GM12878 (cell line): ENCODE measurements at regions of chr6 and their contacts with region 1.

Region 1: GRCh38 chr6:126033696-126034095 is 47.4 kb downstream of the TRMT11 start:
- DNase-seq: no peak
- ATAC-seq: peak; percentile 86
- H3K4me3 ChIP-seq: no peak overlapping the region
- H3K27ac ChIP-seq: no peak overlapping the region
- H3K4me1 ChIP-seq: no peaks in the 10 kb centered on the region
- H3K27me3 ChIP-seq: no peaks in the 10 kb centered on the region
- CTCF ChIP-seq: peak; percentile 34 to 56 (median 46); a peak in 5 of 6 replicates
- EP300 ChIP-seq: no peak
- POLR2A ChIP-seq: no peak
- RAD21 ChIP-seq: peak; percentile 65

Region 2: DNA sequence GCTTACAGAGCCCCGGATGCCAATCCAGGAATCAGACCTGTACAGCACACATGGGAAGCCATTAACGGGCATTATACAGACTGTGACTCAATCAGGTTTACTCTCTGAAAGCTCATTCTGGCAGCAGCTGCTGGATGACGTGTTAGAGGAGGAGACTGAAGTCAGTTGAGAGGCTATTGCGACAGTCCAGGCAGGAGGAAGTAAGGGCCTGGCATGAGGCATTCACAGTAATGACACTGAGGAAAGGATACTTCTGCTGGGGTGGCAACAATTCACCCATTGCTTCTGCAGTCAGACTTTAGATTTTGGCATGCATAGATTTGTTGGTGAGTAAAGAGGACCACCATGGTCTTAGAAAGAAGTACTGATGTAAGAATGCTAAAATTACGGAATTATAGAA is 435.3 kb before region 1 on chr6:
- CTCF ChIA-PET with region 1: no interaction called
- POLR2A ChIA-PET with region 1: no interaction called
- RAD21 ChIA-PET with region 1: no interaction called
- SMC1A ChIA-PET with region 1: no interaction called
- in situ Hi-C with region 1: no loop called
- intact Hi-C with region 1: no loop called
- DNase-seq: no peak
- ATAC-seq: peak; percentile 44
- H3K4me3 ChIP-seq: no peak overlapping the region
- H3K27ac ChIP-seq: no peak overlapping the region
- H3K4me1 ChIP-seq: no peaks in the 10 kb centered on the region
- H3K27me3 ChIP-seq: no peaks in the 10 kb centered on the region; a peak in 1 of 4 replicates
- CTCF ChIP-seq: no peak
- EP300 ChIP-seq: no peak
- POLR2A ChIP-seq: no peak
- RAD21 ChIP-seq: no peak

Region 3: DNA sequence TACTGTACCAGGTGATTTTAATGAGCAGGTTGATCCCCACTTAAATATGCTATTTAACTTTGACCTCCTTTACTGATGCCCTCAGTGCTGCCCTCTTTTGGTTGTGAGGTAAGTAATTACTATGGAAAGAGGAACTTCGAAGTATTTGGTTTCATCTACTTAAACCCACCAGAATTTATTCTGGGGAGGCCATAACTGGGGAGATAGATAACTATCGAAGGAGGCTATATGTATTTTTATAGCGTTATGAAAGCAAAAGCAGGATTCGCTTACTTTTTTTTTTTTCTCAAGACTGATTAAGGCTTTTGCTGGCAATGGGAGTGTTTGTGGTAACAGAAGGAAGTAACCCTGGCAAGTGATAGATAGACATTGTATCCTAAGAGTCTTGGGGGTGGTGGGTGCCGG is 137.3 kb after region 1 on chr6:
- CTCF ChIA-PET with region 1: interaction called, 3 read pairs
- POLR2A ChIA-PET with region 1: no interaction called
- RAD21 ChIA-PET with region 1: no interaction called
- SMC1A ChIA-PET with region 1: interaction called, 4 read pairs
- in situ Hi-C with region 1: no loop called
- intact Hi-C with region 1: loop called (anchors 5 kb)
- DNase-seq: peak; percentile 20
- ATAC-seq: peak; percentile 95
- H3K4me3 ChIP-seq: no peak overlapping the region
- H3K27ac ChIP-seq: no peak overlapping the region
- H3K4me1 ChIP-seq: no peaks in the 10 kb centered on the region
- H3K27me3 ChIP-seq: no peaks in the 10 kb centered on the region
- CTCF ChIP-seq: peak; percentile 44 to 57 (median 45)
- EP300 ChIP-seq: no peak
- POLR2A ChIP-seq: no peak
- RAD21 ChIP-seq: peak; percentile 42

Region 4: DNA sequence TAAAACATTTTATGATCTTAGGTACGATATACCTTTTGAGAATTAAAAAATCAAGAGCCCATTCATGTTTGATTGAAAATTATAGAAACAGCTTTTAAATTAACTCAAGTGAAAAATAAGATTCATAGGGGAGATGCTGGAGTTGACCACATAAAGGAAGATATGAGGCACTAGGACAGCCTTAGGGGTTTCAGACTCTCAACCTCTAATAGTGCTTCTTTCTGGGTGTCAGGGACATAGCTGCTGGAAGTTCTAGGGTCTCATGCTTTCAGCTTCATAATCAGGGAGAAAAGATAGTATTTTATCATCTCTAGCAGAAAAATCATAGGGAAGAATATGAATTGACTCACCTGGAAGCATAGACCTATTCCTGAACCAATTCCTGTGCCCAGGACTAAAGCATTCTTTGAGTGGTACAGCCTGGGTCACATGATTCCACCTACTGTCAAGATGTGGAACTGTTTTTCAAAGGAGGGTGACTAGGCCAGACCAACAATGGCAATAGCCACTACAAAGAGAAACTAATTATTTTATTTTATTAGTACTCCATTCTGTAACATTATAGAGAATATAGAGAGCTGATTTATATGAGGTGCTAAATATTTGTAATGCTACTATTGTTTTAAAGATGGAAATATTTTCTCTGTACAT is 278.4 kb after region 1 on chr6:
- CTCF ChIA-PET with region 1: interaction called, 4 read pairs
- POLR2A ChIA-PET with region 1: no interaction called
- RAD21 ChIA-PET with region 1: no interaction called
- SMC1A ChIA-PET with region 1: no interaction called
- in situ Hi-C with region 1: no loop called
- intact Hi-C with region 1: loop called (anchors 10 kb)
- DNase-seq: no peak
- ATAC-seq: peak; percentile 98
- H3K4me3 ChIP-seq: no peak overlapping the region
- H3K27ac ChIP-seq: no peak overlapping the region
- H3K4me1 ChIP-seq: no peaks in the 10 kb centered on the region
- H3K27me3 ChIP-seq: no peaks in the 10 kb centered on the region
- CTCF ChIP-seq: peak; percentile 30 to 44 (median 41); a peak in 4 of 6 replicates
- EP300 ChIP-seq: no peak
- POLR2A ChIP-seq: no peak
- RAD21 ChIP-seq: peak; percentile 39

Region 5: DNA sequence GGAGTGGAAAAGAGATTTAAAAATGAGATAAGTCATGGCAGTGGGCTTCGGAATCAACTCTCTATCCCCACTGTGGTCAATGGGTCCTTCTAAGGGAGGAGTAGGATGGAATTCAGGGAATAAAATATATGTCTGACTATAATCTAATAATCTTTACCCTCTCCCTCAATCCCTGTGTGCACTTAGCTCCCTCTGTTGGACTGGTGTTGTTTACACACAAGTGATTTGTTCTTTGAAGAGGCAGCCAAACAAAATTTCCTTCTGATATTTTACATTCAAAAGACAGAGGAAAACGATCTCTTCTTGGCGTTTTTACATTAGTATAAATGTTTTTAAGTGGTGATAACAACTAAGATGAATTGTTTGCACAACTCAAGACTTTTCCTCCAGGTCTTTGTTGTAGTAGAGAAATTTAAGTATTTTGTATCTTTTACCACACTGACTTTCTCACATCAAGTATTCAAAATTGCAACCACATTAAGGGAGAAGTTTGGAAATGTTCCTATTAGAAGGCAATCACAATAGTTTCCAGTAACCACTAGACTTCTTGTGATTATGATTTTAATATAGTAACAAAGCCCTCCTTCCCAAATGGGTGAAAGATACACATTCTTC is 624.0 kb after region 1 on chr6:
- CTCF ChIA-PET with region 1: no interaction called
- POLR2A ChIA-PET with region 1: no interaction called
- RAD21 ChIA-PET with region 1: no interaction called
- SMC1A ChIA-PET with region 1: no interaction called
- in situ Hi-C with region 1: no loop called
- intact Hi-C with region 1: loop called (anchors 10 kb)
- DNase-seq: no peak
- ATAC-seq: peak; percentile 40; the same call in 1 of the 3 replicates
- H3K4me3 ChIP-seq: no peak overlapping the region
- H3K27ac ChIP-seq: no peak overlapping the region
- H3K4me1 ChIP-seq: no peaks in the 10 kb centered on the region
- H3K27me3 ChIP-seq: no peaks in the 10 kb centered on the region
- CTCF ChIP-seq: peak; percentile 38 to 55 (median 46); a peak in 4 of 6 replicates
- EP300 ChIP-seq: no peak
- POLR2A ChIP-seq: no peak
- RAD21 ChIP-seq: peak; percentile 66

Region 6: DNA sequence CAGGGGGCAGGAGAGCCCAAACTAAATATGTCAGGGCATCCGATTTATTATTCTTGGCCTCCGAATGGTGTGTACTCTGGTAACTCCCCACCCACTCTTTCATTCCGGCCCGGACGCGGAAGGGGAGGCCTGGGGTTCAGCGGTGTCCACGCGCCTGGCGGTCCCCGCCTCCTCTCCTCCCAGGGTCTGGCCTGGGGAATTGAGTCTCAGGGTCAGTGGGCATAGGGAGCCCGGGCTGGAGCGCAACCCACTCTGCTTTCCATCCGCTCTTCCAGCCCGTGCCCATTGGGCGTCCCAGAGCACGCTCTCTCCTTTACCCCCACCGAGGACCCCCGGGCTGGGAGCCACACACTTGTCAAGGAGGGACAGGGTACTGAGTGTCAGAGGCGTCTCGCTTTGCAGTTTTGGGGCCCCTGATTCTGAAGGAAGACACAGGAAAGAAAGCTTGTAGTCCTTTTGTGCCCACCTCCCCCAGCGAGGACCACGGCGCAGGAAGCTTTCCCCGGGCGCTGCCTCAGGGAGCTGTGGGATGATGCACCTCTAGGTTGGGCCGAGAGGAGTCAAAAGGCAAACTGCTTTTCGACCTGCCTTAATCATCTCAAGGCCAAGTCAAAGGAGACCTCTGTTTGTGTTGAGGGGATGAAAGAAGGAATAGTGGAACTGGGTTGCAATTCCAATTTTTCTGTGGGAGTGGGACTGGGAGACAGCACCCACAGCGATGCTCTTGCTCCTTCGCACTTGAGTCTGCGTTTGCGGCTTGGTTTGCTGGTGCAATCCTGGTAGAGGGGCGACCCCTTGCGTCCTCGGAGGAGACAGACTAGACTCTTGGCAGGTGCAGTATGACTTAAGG is 1087.3 kb after region 1 on chr6:
- CTCF ChIA-PET with region 1: no interaction called
- POLR2A ChIA-PET with region 1: no interaction called
- RAD21 ChIA-PET with region 1: no interaction called
- SMC1A ChIA-PET with region 1: no interaction called
- in situ Hi-C with region 1: no loop called
- intact Hi-C with region 1: loop called (anchors 5 kb)
- DNase-seq: peak; percentile 24
- ATAC-seq: peak; percentile 90
- H3K4me3 ChIP-seq: no peak overlapping the region
- H3K27ac ChIP-seq: no peak overlapping the region
- H3K4me1 ChIP-seq: peaks cover 5% of the 10 kb centered on the region
- H3K27me3 ChIP-seq: peaks cover 9 to 24% of the 10 kb centered on the region in 2 experiments
- CTCF ChIP-seq: peak; percentile 81 to 96 (median 85)
- EP300 ChIP-seq: no peak
- POLR2A ChIP-seq: no peak
- RAD21 ChIP-seq: peak; percentile 97